HAP-1 (cell line): ENCODE measurements at regions of chr12 and their contacts with region 1.

Region 1: DNA sequence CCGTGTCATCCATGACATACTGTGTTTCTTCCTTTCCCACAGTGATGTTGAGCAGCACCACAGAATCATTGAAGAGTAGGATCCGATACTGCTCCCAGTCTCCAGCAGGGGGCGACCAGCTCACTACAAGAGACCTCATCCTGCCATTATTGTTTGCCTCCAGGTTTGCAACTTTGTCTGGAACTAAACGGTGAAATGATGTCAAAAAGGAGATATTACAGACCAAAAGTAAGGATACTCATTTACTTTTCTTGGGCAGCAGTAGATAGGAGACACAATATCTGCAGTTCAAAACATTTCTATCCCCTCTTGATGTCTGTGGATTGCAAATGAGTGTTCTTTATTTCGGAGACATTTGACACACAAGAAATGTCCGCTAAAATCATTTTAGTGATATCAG is 47.2 kb downstream of the PTPRB start:
- DNase-seq: peak; percentile 47 to 87
- H3K4me3 ChIP-seq: no peak overlapping the region
- H3K4me1 ChIP-seq: peaks cover 12% of the 10 kb centered on the region
- H3K27me3 ChIP-seq: no peaks in the 10 kb centered on the region

Region 2: DNA sequence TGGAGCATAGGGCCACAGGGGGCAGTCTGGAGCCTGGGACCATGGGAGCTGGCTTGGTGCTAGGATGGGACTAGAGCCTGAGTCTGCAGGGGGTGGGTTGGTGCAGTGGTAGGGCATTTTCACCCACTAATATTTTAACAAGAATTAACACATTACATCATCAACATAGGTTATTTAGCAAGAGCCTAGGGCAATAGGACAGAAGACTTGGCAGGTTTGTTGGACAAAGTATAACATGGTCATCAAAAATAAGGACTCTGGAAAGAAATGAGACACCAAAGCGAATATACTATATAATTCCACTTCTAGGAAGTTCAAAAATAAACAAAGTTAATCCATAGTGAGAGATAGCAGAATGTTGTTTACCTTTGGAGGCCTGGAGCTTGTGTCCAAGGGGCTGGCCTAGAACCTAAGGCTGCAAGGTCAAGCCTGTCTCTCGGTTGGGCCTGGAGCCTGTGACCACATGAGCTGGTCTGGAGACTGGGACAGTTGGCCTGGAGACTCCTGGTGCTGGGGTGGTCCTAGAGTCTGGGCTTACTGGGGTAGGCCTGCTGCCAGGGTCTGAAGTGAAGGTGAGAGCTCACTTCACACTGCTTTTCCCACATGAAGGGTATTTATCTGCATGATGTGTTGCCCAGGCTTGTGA is 375.0 kb before region 1 on chr12:
- in situ Hi-C with region 1: no loop called
- DNase-seq: no peak
- H3K4me3 ChIP-seq: no peak overlapping the region
- H3K4me1 ChIP-seq: no peaks in the 10 kb centered on the region
- H3K27me3 ChIP-seq: no peaks in the 10 kb centered on the region

Region 3: GRCh38 chr12:70719672-70720420 is 129.8 kb after region 1 on chr12:
- in situ Hi-C with region 1: loop called (anchors 10 kb)
- DNase-seq: peak; percentile 47 to 71
- H3K4me3 ChIP-seq: peak overlapping the region; percentile 26
- H3K4me1 ChIP-seq: no peaks in the 10 kb centered on the region; the same call in 1 of the 2 replicates
- H3K27me3 ChIP-seq: no peaks in the 10 kb centered on the region

Region 4: GRCh38 chr12:71128191-71128788 is 538.2 kb after region 1 on chr12:
- in situ Hi-C with region 1: no loop called
- DNase-seq: no peak
- H3K4me3 ChIP-seq: no peak overlapping the region
- H3K4me1 ChIP-seq: no peaks in the 10 kb centered on the region
- H3K27me3 ChIP-seq: no peaks in the 10 kb centered on the region

Region 5: GRCh38 chr12:71262466-71262865 is 672.4 kb after region 1 on chr12:
- in situ Hi-C with region 1: no loop called
- DNase-seq: no peak
- H3K4me3 ChIP-seq: no peak overlapping the region
- H3K4me1 ChIP-seq: no peaks in the 10 kb centered on the region
- H3K27me3 ChIP-seq: no peaks in the 10 kb centered on the region